Natural killer cell (primary cell): ENCODE measurements at regions of chr2 and their contacts with region 1.

Region 1: DNA sequence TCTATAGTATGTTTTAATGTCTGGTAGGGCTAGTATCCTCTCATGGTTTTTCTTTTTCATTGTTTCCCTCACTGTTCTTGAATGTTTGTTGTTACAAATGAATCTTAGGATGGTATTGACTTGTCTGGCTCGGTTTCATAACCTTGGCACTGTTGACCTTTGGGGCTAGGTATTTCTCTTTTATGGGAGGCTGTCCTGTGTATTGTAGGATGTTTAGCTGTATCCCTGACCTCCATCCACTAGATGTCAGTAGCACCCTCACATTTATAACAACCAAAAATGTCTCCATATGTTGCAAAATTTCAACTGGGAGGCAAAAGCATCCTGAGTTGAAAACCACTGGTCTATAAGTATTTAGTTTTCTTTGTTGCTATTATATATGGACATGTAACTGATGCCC is 7.0 kb upstream of the AOX1 start:
- DNase-seq: peak in 1 of 2 donors; percentile 50
- ATAC-seq: peak; percentile 46 to 49 (median 47)
- H3K4me3 ChIP-seq: no peak overlapping the region
- H3K4me3 Mint-ChIP-seq: no peak overlapping the region
- H3K27ac ChIP-seq: no peak overlapping the region
- H3K27ac Mint-ChIP-seq: no peak overlapping the region
- H3K4me1 ChIP-seq: no peaks in the 10 kb centered on the region
- H3K4me1 Mint-ChIP-seq: no peaks in the 10 kb centered on the region
- H3K27me3 ChIP-seq: no peaks in the 10 kb centered on the region
- H3K27me3 Mint-ChIP-seq: no peaks in the 10 kb centered on the region
- CTCF ChIP-seq: peak; percentile 20

Region 2: GRCh38 chr2:200274116-200275075 is 304.4 kb before region 1 on chr2:
- intact Hi-C with region 1: no loop called
- DNase-seq: no peak
- ATAC-seq: no peak
- H3K4me3 ChIP-seq: no peak overlapping the region
- H3K4me3 Mint-ChIP-seq: no peak overlapping the region
- H3K27ac ChIP-seq: no peak overlapping the region
- H3K27ac Mint-ChIP-seq: no peak overlapping the region
- H3K4me1 ChIP-seq: no peaks in the 10 kb centered on the region
- H3K4me1 Mint-ChIP-seq: no peaks in the 10 kb centered on the region
- H3K27me3 ChIP-seq: no peaks in the 10 kb centered on the region
- H3K27me3 Mint-ChIP-seq: peaks cover 8 to 36% of the 10 kb centered on the region in 2 donors
- CTCF ChIP-seq: no peak

Region 3: DNA sequence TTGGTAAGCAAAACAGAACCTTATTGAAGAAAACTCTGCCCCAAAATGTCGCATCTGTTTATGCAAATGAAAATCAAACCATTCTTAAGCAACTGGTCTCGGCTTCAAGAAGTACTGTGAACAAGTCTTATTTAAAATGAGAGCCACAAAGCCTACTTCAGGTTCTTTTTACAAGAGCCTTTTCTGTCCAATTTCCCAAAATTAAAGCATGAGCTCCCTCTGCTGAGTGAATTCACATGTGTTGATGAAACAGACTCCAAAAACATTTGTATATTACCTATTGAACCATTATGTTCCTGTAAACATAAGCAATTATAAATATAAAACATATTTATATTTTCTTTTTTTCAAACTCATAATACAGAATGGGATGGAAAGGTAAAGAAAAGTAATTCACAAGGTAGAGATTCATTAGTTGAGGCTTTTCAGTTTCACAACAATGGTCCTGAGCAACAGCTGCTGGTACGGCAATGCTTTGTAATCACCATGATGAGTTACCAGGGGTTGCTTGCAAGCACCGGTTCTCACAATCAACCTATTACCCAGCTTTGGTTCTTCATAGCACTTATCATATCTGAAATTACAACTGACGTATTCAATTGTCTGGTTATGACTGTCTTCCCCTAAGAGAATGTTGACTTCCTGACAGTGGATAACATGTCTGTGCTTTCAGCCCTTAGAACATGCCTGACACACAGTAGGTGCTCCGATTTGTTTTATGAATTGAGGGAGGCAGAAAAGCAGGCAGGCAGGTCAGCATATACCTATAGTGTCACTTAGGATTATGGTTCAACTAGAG is 124.5 kb after region 1 on chr2:
- intact Hi-C with region 1: no loop called
- DNase-seq: peak in 1 of 2 donors; percentile 53
- ATAC-seq: no peak
- H3K4me3 ChIP-seq: no peak overlapping the region
- H3K4me3 Mint-ChIP-seq: no peak overlapping the region
- H3K27ac ChIP-seq: no peak overlapping the region
- H3K27ac Mint-ChIP-seq: no peak overlapping the region
- H3K4me1 ChIP-seq: no peaks in the 10 kb centered on the region
- H3K4me1 Mint-ChIP-seq: no peaks in the 10 kb centered on the region
- H3K27me3 ChIP-seq: no peaks in the 10 kb centered on the region
- H3K27me3 Mint-ChIP-seq: peaks cover 10 to 15% of the 10 kb centered on the region in 2 donors
- CTCF ChIP-seq: no peak

Region 4: GRCh38 chr2:200735061-200735460 is 156.3 kb after region 1 on chr2:
- intact Hi-C with region 1: loop called (anchors 5 kb)
- DNase-seq: no peak
- ATAC-seq: no peak
- H3K4me3 ChIP-seq: no peak overlapping the region
- H3K4me3 Mint-ChIP-seq: no peak overlapping the region
- H3K27ac ChIP-seq: no peak overlapping the region
- H3K27ac Mint-ChIP-seq: no peak overlapping the region
- H3K4me1 ChIP-seq: no peaks in the 10 kb centered on the region
- H3K4me1 Mint-ChIP-seq: peaks cover 0 to 5% of the 10 kb centered on the region in 2 donors
- H3K27me3 ChIP-seq: no peaks in the 10 kb centered on the region
- H3K27me3 Mint-ChIP-seq: peaks cover 0 to 7% of the 10 kb centered on the region in 2 donors
- CTCF ChIP-seq: no peak